B cell (primary cell): ENCODE measurements at regions of chr3 and their contacts with region 1.

Region 1: GRCh38 chr3:182683453-182683852 is 109.9 kb upstream of the ATP11B start:
- DNase-seq: peak; percentile 77
- ATAC-seq: peak; percentile 74
- H3K4me3 ChIP-seq: peak overlapping the region in 1 of 5 experiments; percentile 76
- H3K4me3 Mint-ChIP-seq: peak overlapping the region; percentile 77
- H3K27ac ChIP-seq: no peak overlapping the region
- H3K27ac Mint-ChIP-seq: no peak overlapping the region
- H3K4me1 ChIP-seq: peaks cover 8 to 10% of the 10 kb centered on the region in 2 donors
- H3K4me1 Mint-ChIP-seq: peaks cover 9% of the 10 kb centered on the region
- H3K27me3 ChIP-seq: peaks cover 0 to 29% (median 14%) of the 10 kb centered on the region in 4 experiments
- H3K27me3 Mint-ChIP-seq: peaks cover 40% of the 10 kb centered on the region
- CTCF ChIP-seq: peak; percentile 99

Region 2: DNA sequence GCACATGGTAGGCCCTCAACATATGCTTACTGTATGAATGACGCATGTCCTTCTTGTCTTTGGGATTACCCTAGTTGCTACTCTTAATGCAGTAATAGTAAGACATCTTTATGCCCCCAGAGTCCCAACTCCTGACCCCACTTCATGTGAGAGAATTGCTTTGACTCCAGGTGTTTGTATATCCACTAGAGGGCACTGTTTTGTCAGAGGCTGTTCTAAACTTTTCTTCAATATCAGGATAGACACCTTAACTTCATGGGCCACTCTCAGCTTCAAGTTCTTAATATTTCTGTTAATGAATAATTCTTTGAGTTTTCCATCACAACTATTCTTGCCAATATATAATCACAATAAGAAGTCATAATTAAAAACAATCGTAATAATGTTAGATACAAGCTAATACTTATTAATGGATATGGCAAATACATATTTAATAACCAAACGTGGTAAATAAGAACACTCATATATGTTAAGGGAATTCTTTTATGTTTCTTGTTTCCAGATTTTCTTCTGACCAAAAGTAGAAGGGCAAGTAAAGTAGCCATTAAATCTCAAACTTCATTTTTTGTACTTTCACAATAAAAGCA is 1356.7 kb before region 1 on chr3:
- CTCF ChIA-PET with region 1: interaction called, 34 read pairs
- POLR2A ChIA-PET with region 1: no interaction called
- intact Hi-C with region 1: no loop called
- DNase-seq: peak; percentile 29
- ATAC-seq: no peak
- H3K4me3 ChIP-seq: no peak overlapping the region
- H3K4me3 Mint-ChIP-seq: no peak overlapping the region
- H3K27ac ChIP-seq: no peak overlapping the region
- H3K27ac Mint-ChIP-seq: no peak overlapping the region
- H3K4me1 ChIP-seq: no peaks in the 10 kb centered on the region
- H3K4me1 Mint-ChIP-seq: no peaks in the 10 kb centered on the region
- H3K27me3 ChIP-seq: no peaks in the 10 kb centered on the region
- H3K27me3 Mint-ChIP-seq: peaks cover 13% of the 10 kb centered on the region
- CTCF ChIP-seq: peak; percentile 77

Region 3: GRCh38 chr3:181709537-181710279 is 973.7 kb before region 1 on chr3:
- CTCF ChIA-PET with region 1: interaction called, 38 read pairs
- POLR2A ChIA-PET with region 1: no interaction called
- intact Hi-C with region 1: loop called (anchors 1 kb)
- DNase-seq: peak; percentile 74
- ATAC-seq: no peak
- H3K4me3 ChIP-seq: no peak overlapping the region
- H3K4me3 Mint-ChIP-seq: peak overlapping the region; percentile 68
- H3K27ac ChIP-seq: no peak overlapping the region
- H3K27ac Mint-ChIP-seq: peak overlapping the region; percentile 50
- H3K4me1 ChIP-seq: peaks cover 27 to 41% of the 10 kb centered on the region in 2 donors
- H3K4me1 Mint-ChIP-seq: peaks cover 12% of the 10 kb centered on the region
- H3K27me3 ChIP-seq: peaks cover 0 to 76% (median 52%) of the 10 kb centered on the region in 4 experiments
- H3K27me3 Mint-ChIP-seq: peaks cover 48% of the 10 kb centered on the region
- CTCF ChIP-seq: peak; percentile 91

Region 4: GRCh38 chr3:182248351-182248880 is 435.0 kb before region 1 on chr3:
- CTCF ChIA-PET with region 1: interaction called, 4 read pairs
- POLR2A ChIA-PET with region 1: no interaction called
- intact Hi-C with region 1: loop called (anchors 5 kb)
- DNase-seq: no peak
- ATAC-seq: no peak
- H3K4me3 ChIP-seq: no peak overlapping the region
- H3K4me3 Mint-ChIP-seq: no peak overlapping the region
- H3K27ac ChIP-seq: no peak overlapping the region
- H3K27ac Mint-ChIP-seq: no peak overlapping the region
- H3K4me1 ChIP-seq: no peaks in the 10 kb centered on the region
- H3K4me1 Mint-ChIP-seq: no peaks in the 10 kb centered on the region
- H3K27me3 ChIP-seq: no peaks in the 10 kb centered on the region
- H3K27me3 Mint-ChIP-seq: peaks cover 3% of the 10 kb centered on the region
- CTCF ChIP-seq: no peak